Naive thymus-derived CD4-positive, alpha-beta T cell (primary cell): ENCODE measurements at regions of chr1 and their contacts with region 1.

Region 1: GRCh38 chr1:92749024-92749634 is 35.8 kb downstream of the EVI5 start:
- DNase-seq: peak in 7 of 9 donors; percentile 12 to 53 (median 41)
- ATAC-seq: peak; percentile 75
- H3K4me3 ChIP-seq: no peak overlapping the region
- H3K4me3 Mint-ChIP-seq: no peak overlapping the region
- H3K27ac ChIP-seq: no peak overlapping the region
- H3K27ac Mint-ChIP-seq: no peak overlapping the region
- H3K4me1 ChIP-seq: no peaks in the 10 kb centered on the region
- H3K4me1 Mint-ChIP-seq: peaks cover 0 to 5% (median 0%) of the 10 kb centered on the region in 7 donors
- H3K27me3 ChIP-seq: no peaks in the 10 kb centered on the region
- H3K27me3 Mint-ChIP-seq: peaks cover 0 to 7% (median 0%) of the 10 kb centered on the region in 5 donors

Region 2: DNA sequence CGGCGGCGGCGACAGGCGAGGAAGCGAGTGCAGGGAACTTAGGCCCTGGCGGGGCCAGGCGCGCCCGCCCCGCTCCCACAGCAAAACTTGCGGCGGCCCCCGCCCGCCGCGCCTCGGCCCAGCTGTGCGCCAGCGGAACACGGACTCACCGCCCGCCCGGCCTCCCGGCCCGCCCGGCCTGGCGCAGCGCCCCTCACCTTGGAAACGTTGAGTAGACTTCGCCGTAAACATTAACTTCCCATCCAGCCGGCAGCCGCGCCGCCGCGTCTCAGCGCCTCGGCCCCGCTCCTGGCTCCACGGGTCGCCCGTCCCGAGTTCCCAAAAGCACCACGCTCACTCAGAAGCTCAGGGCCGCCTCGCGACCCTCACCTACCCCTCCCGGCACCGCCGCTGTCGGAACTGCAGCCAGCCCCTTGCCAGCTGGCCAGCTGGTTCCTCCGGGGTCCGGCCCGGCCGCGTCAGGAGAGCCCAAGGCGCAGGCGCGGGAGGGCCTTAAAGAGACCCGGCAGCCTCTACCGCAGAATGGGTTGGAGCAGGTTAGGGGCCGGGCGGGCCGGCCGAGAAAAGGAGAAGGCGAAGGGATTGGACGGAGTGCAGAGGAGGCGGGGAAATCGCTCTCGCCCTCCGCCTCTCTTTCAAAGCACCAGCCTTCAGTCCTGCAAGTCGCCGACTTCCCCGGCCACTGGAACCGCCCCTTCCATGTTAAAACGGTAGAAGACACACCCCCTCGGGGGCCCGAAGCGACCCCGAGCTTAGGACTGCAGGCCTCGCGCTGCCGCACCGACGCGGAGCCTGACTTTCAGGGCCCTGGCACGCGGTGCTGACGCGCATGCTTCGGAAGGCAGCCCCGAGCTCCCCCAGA is 35.7 kb after region 1 on chr1 and contains the start of gene EVI5:
- CTCF ChIA-PET with region 1: no interaction called
- POLR2A ChIA-PET with region 1: no interaction called
- intact Hi-C with region 1: loop called in 1 of 2 experiments (anchors 1 kb)
- DNase-seq: peak; percentile 26 to 72 (median 59)
- ATAC-seq: peak; percentile 91
- H3K4me3 ChIP-seq: peak within 1 kb of the TSS; percentile 62
- H3K4me3 Mint-ChIP-seq: peak within 1 kb of the TSS; percentile 67 to 91 (median 85)
- H3K27ac ChIP-seq: peak within 1 kb of the TSS; percentile 26
- H3K27ac Mint-ChIP-seq: peak within 1 kb of the TSS in 6 of 9 donors; percentile 20 to 72 (median 46)
- H3K4me1 ChIP-seq: peaks cover 8 to 10% of the 10 kb centered on the region in 2 donors
- H3K4me1 Mint-ChIP-seq: peaks cover 7 to 25% (median 19%) of the 10 kb centered on the region in 7 donors
- H3K27me3 ChIP-seq: peaks cover 3 to 7% of the 10 kb centered on the region in 2 donors
- H3K27me3 Mint-ChIP-seq: peaks cover 10 to 81% (median 32%) of the 10 kb centered on the region in 5 donors
- total RNA-seq, gene EVI5: 0.97 to 12.3 (median 2.2) TPM

Region 3: DNA sequence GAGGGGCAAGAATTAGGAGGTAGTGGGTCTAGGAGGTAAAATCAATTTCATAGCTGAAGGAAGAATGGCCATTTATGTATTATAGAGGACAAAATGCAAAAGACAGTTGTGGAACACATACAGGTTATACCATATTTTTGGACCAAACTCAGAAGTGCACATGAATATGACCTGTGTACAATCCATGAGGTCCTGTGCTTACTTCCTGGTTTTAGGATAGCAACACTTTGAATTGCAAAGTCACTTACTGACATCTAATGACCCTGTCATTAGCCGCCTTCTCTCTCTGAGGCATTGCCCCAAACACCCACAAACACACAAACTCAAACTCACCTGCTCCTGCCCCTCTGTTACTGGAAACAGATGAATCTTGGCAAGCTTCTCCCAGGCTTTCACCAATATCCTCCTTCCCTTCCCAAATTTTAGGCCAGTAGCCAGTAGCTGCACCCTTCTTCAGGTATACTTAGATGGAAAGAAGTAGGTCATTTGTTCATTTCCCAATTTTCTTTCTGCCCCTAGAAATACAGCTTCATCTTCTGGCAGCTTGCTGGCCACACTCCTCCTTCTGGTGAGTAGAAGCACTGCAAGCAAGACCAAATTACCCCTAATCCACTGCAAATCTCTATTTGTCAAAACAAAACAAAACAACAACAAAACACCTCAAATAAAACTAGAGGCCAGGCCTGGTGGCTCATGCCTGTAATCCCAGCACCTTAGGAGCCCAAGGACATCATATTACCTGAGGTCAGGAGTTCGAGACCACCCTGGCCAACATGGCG is 69.0 kb after region 1 on chr1:
- CTCF ChIA-PET with region 1: interaction called, 21 read pairs
- POLR2A ChIA-PET with region 1: no interaction called
- intact Hi-C with region 1: loop called (anchors 1 kb)
- DNase-seq: peak in 4 of 9 donors; percentile 20 to 28 (median 28)
- ATAC-seq: peak; percentile 71
- H3K4me3 ChIP-seq: no peak overlapping the region
- H3K4me3 Mint-ChIP-seq: no peak overlapping the region
- H3K27ac ChIP-seq: no peak overlapping the region
- H3K27ac Mint-ChIP-seq: peak overlapping the region in 1 of 9 donors; percentile 31
- H3K4me1 ChIP-seq: no peaks in the 10 kb centered on the region
- H3K4me1 Mint-ChIP-seq: no peaks in the 10 kb centered on the region
- H3K27me3 ChIP-seq: no peaks in the 10 kb centered on the region
- H3K27me3 Mint-ChIP-seq: peaks cover 0 to 39% (median 9%) of the 10 kb centered on the region in 5 donors

Region 4: GRCh38 chr1:92989253-92989652 is 240.1 kb after region 1 on chr1:
- CTCF ChIA-PET with region 1: no interaction called
- POLR2A ChIA-PET with region 1: no interaction called
- intact Hi-C with region 1: no loop called
- DNase-seq: no peak
- ATAC-seq: no peak
- H3K4me3 ChIP-seq: no peak overlapping the region
- H3K4me3 Mint-ChIP-seq: peak overlapping the region in 6 of 10 donors; percentile 47 to 90 (median 59)
- H3K27ac ChIP-seq: no peak overlapping the region
- H3K27ac Mint-ChIP-seq: peak overlapping the region in 8 of 9 donors; percentile 11 to 95 (median 67)
- H3K4me1 ChIP-seq: peaks cover 39% of the 10 kb centered on the region in 2 donors
- H3K4me1 Mint-ChIP-seq: peaks cover 31 to 64% (median 54%) of the 10 kb centered on the region in 7 donors
- H3K27me3 ChIP-seq: no peaks in the 10 kb centered on the region
- H3K27me3 Mint-ChIP-seq: no peaks in the 10 kb centered on the region

Region 5: GRCh38 chr1:93061895-93062792 is 313.0 kb after region 1 on chr1:
- CTCF ChIA-PET with region 1: no interaction called
- POLR2A ChIA-PET with region 1: no interaction called
- intact Hi-C with region 1: loop called in 1 of 2 experiments (anchors 5 kb)
- DNase-seq: peak in 7 of 9 donors; percentile 14 to 54 (median 49)
- ATAC-seq: peak; percentile 80
- H3K4me3 ChIP-seq: no peak overlapping the region
- H3K4me3 Mint-ChIP-seq: no peak overlapping the region
- H3K27ac ChIP-seq: no peak overlapping the region
- H3K27ac Mint-ChIP-seq: peak overlapping the region in 1 of 9 donors; percentile 23
- H3K4me1 ChIP-seq: no peaks in the 10 kb centered on the region
- H3K4me1 Mint-ChIP-seq: peaks cover 0 to 6% (median 3%) of the 10 kb centered on the region in 7 donors
- H3K27me3 ChIP-seq: peaks cover 0 to 1% of the 10 kb centered on the region in 2 donors
- H3K27me3 Mint-ChIP-seq: peaks cover 5 to 53% (median 16%) of the 10 kb centered on the region in 5 donors